ENCODE measurements at regions of chr3 and their contacts with region 1.

Region 1: DNA sequence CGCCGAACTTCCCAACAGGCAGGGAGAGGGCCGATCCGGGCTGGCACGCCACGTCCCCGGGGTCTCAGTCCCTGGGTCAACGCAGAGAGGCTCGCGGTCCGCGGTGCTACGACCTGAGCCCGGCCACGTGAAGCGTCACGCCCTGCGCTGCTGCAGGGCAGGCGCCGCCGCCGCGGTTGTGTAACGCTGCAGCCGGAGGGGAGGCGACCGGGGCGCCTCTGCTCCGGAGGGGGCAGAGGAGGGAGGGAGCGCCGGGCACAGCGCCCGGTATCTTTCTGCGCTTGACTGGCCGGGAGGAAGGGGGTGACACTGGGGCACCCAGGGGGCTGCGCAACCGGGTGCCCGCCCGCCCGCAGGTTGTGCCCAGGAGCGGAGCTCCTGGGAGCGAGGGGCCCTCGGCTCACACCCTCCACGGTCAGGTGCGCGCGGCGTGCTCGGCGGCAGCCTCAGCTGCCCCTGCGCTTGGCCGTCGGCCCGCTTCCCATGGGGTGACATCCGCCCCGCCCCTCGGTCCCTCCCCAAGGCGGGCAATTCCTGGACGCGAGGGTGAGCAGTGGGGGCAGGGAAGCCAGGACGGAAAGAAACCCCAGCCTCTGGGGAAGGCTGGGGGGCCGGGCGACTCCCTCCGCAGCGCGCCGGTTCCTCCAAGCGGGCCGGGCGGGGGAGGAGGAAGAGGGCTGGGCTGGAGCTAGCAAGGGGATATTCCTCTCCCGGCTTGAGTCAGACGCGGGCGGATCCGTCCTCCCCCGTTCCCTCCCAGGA is 852 bp upstream of the BHLHE40 start:
- DNase-seq: peak; percentile 94
- ATAC-seq: peak; percentile 68
- H3K4me3 ChIP-seq: peak overlapping the region; percentile 46 to 87
- H3K27ac ChIP-seq: peak overlapping the region; percentile 91
- H3K4me1 ChIP-seq: peaks cover 44 to 64% of the 10 kb centered on the region in 2 experiments
- H3K27me3 ChIP-seq: no peaks in the 10 kb centered on the region
- CTCF ChIP-seq: no peak
- POLR2A ChIP-seq: peak; percentile 60
- RAD21 ChIP-seq: no peak

Region 2: DNA sequence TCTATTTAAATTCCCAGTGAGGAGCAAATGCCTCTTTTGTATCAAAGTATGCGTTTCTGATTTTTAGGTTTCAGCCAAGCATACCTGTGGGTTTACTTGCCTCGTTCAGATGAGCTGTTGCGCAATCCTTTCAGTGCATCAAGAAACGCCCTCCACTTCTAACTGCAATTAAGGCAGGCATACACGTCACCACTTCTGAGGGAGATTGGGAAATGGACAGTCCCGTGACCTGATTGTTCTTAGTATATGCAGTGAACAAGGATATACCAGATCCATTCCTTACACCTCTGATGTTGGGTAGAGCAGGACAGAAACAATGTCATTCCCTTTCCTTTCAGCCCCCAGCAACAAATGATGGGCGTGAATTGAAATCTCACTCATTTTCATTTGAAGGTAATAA is 266.2 kb before region 1 on chr3:
- CTCF ChIA-PET with region 1: interaction called, 59 read pairs
- POLR2A ChIA-PET with region 1: interaction called, 5 read pairs
- RAD21 ChIA-PET with region 1: interaction called, 6 to 12 read pairs
- intact Hi-C with region 1: loop called (anchors 1 kb)
- DNase-seq: peak; percentile 21
- ATAC-seq: no peak
- H3K4me3 ChIP-seq: no peak overlapping the region
- H3K27ac ChIP-seq: no peak overlapping the region
- H3K4me1 ChIP-seq: peaks cover 8% of the 10 kb centered on the region in 2 experiments; a peak in 2 of 4 replicates
- H3K27me3 ChIP-seq: no peaks in the 10 kb centered on the region
- CTCF ChIP-seq: no peak
- POLR2A ChIP-seq: no peak
- RAD21 ChIP-seq: no peak

Region 3: DNA sequence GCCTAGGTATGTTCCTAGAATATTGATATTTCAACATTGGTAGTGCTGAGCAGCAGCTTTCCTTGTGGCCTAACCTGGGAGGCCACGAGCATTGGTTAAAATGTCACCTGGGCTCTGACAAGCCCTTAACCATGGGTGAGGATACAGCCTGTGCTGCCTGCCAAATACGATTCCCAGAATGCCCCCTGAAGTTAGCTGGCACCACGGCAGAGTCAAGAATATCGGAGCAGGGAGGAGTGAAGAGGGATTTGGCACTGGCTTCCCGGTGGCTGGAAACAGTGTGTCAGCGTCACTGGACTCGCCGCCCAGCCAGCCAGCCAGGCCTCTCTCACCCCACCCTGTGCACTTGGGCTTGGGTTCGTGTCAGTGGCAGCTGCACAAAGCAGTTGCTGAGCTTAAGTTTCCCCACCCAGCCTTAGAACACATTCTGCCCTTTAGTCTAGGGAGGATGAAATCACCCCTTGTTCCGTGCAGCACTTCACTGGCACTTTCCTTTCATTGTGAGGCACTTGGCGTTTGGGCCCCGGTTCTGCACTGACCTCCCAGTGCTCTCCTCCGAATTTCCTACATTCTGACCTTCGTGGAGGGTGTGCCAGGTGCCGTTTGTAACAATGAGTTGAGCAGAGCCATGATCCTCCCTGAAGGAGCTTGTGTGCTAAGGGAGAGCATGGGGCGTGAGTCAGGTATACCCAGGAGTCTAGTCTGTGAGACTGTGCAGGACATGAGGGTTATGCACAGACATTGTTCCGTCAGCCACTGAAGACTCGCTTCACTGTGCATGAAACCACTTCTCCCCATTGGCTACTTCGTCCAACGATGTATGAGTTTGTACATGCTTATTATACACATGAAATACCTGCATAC is 151.9 kb before region 1 on chr3:
- CTCF ChIA-PET with region 1: interaction called, 4 read pairs
- POLR2A ChIA-PET with region 1: no interaction called
- RAD21 ChIA-PET with region 1: no interaction called
- intact Hi-C with region 1: loop called (anchors 5 kb)
- DNase-seq: no peak
- ATAC-seq: peak; percentile 17; the same call in 1 of the 2 replicates
- H3K4me3 ChIP-seq: no peak overlapping the region
- H3K27ac ChIP-seq: no peak overlapping the region
- H3K4me1 ChIP-seq: peaks cover 20 to 56% of the 10 kb centered on the region in 2 experiments
- H3K27me3 ChIP-seq: no peaks in the 10 kb centered on the region
- CTCF ChIP-seq: no peak
- POLR2A ChIP-seq: no peak
- RAD21 ChIP-seq: no peak

Region 4: GRCh38 chr3:4963669-4964589 is 14.5 kb before region 1 on chr3:
- CTCF ChIA-PET with region 1: interaction called, 19 read pairs
- POLR2A ChIA-PET with region 1: interaction called, 3 read pairs
- RAD21 ChIA-PET with region 1: interaction called in 1 of 2 experiments, 7 read pairs
- intact Hi-C with region 1: no loop called
- DNase-seq: no peak
- ATAC-seq: no peak
- H3K4me3 ChIP-seq: no peak overlapping the region
- H3K27ac ChIP-seq: no peak overlapping the region
- H3K4me1 ChIP-seq: peaks cover 2 to 6% of the 10 kb centered on the region in 2 experiments; a peak in 2 of 4 replicates
- H3K27me3 ChIP-seq: no peaks in the 10 kb centered on the region
- CTCF ChIP-seq: no peak
- POLR2A ChIP-seq: no peak
- RAD21 ChIP-seq: no peak

Region 5: GRCh38 chr3:5016218-5017161 is 38.1 kb after region 1 on chr3:
- CTCF ChIA-PET with region 1: interaction called, 5 read pairs
- POLR2A ChIA-PET with region 1: interaction called, 39 read pairs
- RAD21 ChIA-PET with region 1: interaction called in 1 of 2 experiments, 3 read pairs
- intact Hi-C with region 1: no loop called
- DNase-seq: peak; percentile 72
- ATAC-seq: peak; percentile 50
- H3K4me3 ChIP-seq: peak overlapping the region in 1 of 2 experiments; percentile 9; a peak in 1 of 4 replicates
- H3K27ac ChIP-seq: peak overlapping the region; percentile 1; the same call in 1 of the 2 replicates
- H3K4me1 ChIP-seq: peaks cover 61 to 99% of the 10 kb centered on the region in 2 experiments
- H3K27me3 ChIP-seq: no peaks in the 10 kb centered on the region
- CTCF ChIP-seq: no peak
- POLR2A ChIP-seq: no peak
- RAD21 ChIP-seq: no peak

Region 6: GRCh38 chr3:5057857-5058324 is 79.5 kb after region 1 on chr3:
- CTCF ChIA-PET with region 1: interaction called, 3 read pairs
- POLR2A ChIA-PET with region 1: no interaction called
- RAD21 ChIA-PET with region 1: interaction called, 4 to 8 read pairs
- intact Hi-C with region 1: loop called (anchors 1 kb)
- DNase-seq: peak; percentile 85
- ATAC-seq: peak; percentile 95
- H3K4me3 ChIP-seq: no peak overlapping the region
- H3K27ac ChIP-seq: no peak overlapping the region
- H3K4me1 ChIP-seq: peaks cover 0 to 23% of the 10 kb centered on the region in 2 experiments; a peak in 2 of 4 replicates
- H3K27me3 ChIP-seq: no peaks in the 10 kb centered on the region
- CTCF ChIP-seq: peak; percentile 64 to 95 (median 76)
- POLR2A ChIP-seq: no peak
- RAD21 ChIP-seq: peak; percentile 97

Measured in HCT116 (cell line).